Activated B cell treated with CpG ODN at 0.5 μM for 24 hours (primary cell): ENCODE measurements at regions of chr11 and their contacts with region 1.

Region 1: DNA sequence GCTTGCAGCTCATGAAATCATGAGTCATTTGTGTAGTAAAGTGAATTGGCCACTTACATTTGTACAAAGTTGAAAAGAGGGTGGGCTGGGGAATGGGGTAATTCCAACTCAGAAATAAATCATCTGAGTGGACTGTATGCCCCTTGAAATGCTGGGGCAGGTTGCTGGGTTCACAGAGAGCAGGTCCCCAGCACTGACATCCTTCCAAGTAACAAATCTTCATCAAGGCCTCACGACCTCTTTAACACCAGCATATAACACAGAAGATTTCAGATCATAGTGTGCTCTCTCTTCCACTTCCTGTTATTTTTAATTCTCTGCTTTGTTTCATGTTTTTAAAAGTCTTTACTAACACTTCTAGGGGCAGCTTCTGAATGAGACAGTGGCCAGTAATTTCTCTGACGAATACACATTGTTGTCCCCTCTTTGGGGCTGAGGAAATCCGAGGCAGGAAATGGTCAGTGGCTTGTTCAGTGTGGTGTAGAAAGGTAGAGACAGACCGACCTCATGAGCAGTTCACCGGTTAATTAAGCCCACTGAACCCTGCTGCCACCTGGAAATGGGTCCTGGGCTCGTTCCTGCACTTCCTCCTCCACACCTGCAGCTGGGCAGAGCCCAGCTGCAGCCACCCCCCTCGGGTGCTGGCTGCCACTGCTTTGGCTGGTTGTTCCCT is 127.7 kb downstream of the MAML2 start:
- DNase-seq: peak; percentile 30
- ATAC-seq: peak; percentile 82
- H3K4me3 Mint-ChIP-seq: peak overlapping the region; percentile 78
- H3K27ac Mint-ChIP-seq: peak overlapping the region; percentile 99
- H3K4me1 Mint-ChIP-seq: peaks cover 83% of the 10 kb centered on the region
- H3K27me3 Mint-ChIP-seq: no peaks in the 10 kb centered on the region
- CTCF ChIP-seq: no peak

Region 2: DNA sequence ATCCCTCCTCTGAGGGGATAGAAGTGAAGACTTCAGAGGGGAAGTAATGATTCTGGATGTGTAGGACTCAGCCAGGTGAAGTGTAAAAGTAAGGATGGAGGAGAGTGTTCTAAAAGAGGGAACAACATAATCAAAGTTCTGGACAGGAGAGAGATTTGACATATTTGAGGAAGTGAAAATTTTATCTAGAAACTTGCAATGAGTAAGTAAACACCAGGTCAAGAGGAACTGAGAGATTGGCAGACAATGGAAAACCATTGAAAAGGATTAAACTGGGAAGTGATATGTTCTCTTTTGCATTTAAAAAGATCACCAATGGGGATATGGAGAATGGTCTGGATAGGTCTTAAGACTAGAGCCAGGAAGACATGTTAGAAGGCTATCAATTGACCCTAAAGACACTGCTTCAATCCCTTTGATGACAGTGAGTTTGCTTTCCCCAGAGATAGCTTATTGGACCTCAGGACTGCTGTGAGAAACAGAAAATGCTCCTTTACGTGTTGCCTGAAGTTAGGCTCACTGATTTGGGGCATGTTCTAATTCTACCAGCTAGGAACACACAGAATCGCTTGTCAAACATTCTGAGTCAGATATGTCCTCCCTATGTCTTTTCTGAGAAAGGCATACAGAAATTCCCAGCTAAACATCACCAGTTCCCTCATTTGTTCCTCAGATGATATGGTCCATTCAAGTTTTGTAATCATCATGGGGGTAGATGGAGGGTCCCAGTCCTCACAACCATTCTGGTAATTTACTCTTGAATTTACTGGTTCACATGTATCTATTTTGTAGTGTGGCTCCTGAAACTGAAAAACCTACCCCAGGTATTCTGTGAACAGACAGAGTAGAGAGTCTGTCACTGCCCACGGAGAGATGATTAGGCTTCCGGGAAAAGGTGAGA is 17.2 kb before region 1 on chr11:
- CTCF ChIA-PET with region 1: no interaction called
- POLR2A ChIA-PET with region 1: interaction called, 4 read pairs
- intact Hi-C with region 1: loop called (anchors 1 kb)
- DNase-seq: no peak
- ATAC-seq: peak; percentile 87
- H3K4me3 Mint-ChIP-seq: peak overlapping the region; percentile 48
- H3K27ac Mint-ChIP-seq: peak overlapping the region; percentile 78
- H3K4me1 Mint-ChIP-seq: peaks cover 64% of the 10 kb centered on the region
- H3K27me3 Mint-ChIP-seq: no peaks in the 10 kb centered on the region
- CTCF ChIP-seq: no peak

Region 3: DNA sequence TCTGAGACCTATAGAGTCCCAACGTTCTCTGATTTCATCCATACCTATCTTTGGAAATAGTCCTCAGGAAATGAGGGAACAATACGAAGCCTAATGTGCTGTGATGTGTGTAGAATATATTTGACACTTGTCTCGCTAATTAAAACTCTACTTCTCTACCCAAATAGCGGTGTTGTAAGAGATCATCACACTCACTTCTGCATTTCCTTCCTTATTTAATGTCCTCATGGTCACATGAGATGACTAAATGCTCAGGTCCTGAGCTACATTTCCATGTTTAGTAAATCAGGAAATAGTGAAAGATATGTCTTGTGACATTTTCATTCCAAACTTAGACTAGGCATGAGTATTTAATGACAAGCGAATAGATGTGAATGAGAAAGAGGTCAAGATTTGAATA is 15.4 kb after region 1 on chr11:
- CTCF ChIA-PET with region 1: interaction called, 3 read pairs
- POLR2A ChIA-PET with region 1: interaction called, 4 read pairs
- intact Hi-C with region 1: loop called (anchors 2 kb)
- DNase-seq: no peak
- ATAC-seq: peak; percentile 58
- H3K4me3 Mint-ChIP-seq: peak overlapping the region; percentile 52
- H3K27ac Mint-ChIP-seq: peak overlapping the region; percentile 57
- H3K4me1 Mint-ChIP-seq: peaks cover 47% of the 10 kb centered on the region
- H3K27me3 Mint-ChIP-seq: no peaks in the 10 kb centered on the region
- CTCF ChIP-seq: no peak

Region 4: GRCh38 chr11:96242971-96243647 is 27.9 kb after region 1 on chr11:
- CTCF ChIA-PET with region 1: no interaction called
- POLR2A ChIA-PET with region 1: interaction called, 9 read pairs
- intact Hi-C with region 1: loop called (anchors 1 kb)
- DNase-seq: peak; percentile 51
- ATAC-seq: peak; percentile 87
- H3K4me3 Mint-ChIP-seq: peak overlapping the region; percentile 90
- H3K27ac Mint-ChIP-seq: peak overlapping the region; percentile 95
- H3K4me1 Mint-ChIP-seq: peaks cover 53% of the 10 kb centered on the region
- H3K27me3 Mint-ChIP-seq: no peaks in the 10 kb centered on the region
- CTCF ChIP-seq: no peak

Region 5: GRCh38 chr11:96254087-96254486 is 38.8 kb after region 1 on chr11:
- CTCF ChIA-PET with region 1: no interaction called
- POLR2A ChIA-PET with region 1: interaction called, 5 read pairs
- intact Hi-C with region 1: loop called (anchors 2 kb)
- DNase-seq: no peak
- ATAC-seq: no peak
- H3K4me3 Mint-ChIP-seq: peak overlapping the region; percentile 73
- H3K27ac Mint-ChIP-seq: peak overlapping the region; percentile 99
- H3K4me1 Mint-ChIP-seq: peaks cover 82% of the 10 kb centered on the region
- H3K27me3 Mint-ChIP-seq: no peaks in the 10 kb centered on the region
- CTCF ChIP-seq: no peak

Region 6: GRCh38 chr11:96357794-96358193 is 142.5 kb after region 1 on chr11:
- CTCF ChIA-PET with region 1: no interaction called
- POLR2A ChIA-PET with region 1: no interaction called
- intact Hi-C with region 1: no loop called
- DNase-seq: no peak
- ATAC-seq: no peak
- H3K4me3 Mint-ChIP-seq: no peak overlapping the region
- H3K27ac Mint-ChIP-seq: peak overlapping the region; percentile 39
- H3K4me1 Mint-ChIP-seq: no peaks in the 10 kb centered on the region
- H3K27me3 Mint-ChIP-seq: no peaks in the 10 kb centered on the region
- CTCF ChIP-seq: no peak